ENCODE measurements at regions of chr17 and their contacts with region 1.

Region 1: GRCh38 chr17:55735731-55736405 is 13.2 kb upstream of the TMEM100 start:
- DNase-seq: no peak
- ATAC-seq: no peak

Region 2: GRCh38 chr17:55285340-55286301 is 450.2 kb before region 1 on chr17:
- intact Hi-C with region 1: loop called (anchors 10 kb)
- DNase-seq: peak; percentile 92
- ATAC-seq: peak; percentile 85

Region 3: DNA sequence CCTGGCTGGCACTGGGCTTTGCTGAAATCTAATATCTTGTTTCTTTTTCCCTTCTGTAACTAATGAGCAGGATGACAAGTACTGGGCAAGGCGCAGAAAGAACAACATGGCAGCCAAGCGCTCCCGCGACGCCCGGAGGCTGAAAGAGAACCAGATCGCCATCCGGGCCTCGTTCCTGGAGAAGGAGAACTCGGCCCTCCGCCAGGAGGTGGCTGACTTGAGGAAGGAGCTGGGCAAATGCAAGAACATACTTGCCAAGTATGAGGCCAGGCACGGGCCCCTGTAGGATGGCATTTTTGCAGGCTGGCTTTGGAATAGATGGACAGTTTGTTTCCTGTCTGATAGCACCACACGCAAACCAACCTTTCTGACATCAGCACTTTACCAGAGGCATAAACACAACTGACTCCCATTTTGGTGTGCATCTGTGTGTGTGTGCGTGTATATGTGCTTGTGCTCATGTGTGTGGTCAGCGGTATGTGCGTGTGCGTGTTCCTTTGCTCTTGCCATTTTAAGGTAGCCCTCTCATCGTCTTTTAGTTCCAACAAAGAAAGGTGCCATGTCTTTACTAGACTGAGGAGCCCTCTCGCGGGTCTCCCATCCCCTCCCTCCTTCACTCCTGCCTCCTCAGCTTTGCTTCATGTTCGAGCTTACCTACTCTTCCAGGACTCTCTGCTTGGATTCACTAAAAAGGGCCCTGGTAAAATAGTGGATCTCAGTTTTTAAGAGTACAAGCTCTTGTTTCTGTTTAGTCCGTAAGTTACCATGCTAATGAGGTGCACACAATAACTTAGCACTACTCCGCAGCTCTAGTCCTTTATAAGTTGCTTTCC is 415.1 kb before region 1 on chr17:
- intact Hi-C with region 1: no loop called
- DNase-seq: peak; percentile 63
- ATAC-seq: no peak

Region 4: DNA sequence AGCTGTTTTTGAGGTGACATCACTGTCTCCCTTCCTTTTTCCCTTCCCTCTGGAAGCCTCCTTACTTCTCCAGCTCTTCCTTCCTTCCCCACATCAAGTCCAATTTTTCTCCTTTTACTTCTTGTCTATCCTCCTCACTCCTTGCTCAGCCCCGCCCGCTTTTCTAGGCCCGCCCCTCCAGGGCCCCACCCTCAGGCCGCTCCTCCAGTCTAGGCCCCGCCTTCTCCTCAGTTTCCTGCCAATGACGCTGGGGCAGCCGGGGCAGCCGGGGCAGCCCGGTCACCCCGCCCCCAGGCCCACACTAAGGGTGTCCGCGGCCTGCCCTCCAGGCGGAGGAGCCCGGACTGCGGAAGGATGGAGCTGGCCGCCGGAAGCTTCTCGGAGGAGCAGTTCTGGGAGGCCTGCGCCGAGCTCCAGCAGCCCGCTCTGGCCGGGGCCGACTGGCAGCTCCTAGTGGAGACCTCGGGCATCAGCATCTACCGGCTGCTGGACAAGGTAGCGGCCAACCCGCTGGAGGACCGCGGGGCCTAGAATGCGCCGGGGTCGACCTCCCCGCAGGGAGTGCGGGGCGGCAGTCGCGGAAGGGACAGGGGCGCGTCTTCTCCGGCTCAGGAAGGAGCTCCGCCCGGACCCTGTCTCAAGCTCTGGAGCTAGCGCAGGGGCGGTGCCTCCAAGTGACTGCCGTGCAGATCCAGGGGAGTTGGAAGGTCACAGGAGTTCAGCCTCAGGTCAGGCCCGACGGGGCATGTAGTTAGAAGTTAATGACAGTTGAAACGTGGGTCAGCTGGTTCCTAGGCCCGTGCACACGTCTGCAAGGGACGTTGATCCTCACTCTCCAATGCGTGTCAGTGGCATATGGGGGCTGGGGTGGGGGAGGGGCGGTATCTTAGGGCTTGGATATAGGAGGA is 15.1 kb after region 1 on chr17 and contains the start of gene PCTP:
- intact Hi-C with region 1: loop called (anchors 2 kb)
- DNase-seq: peak; percentile 98
- ATAC-seq: peak; percentile 100
- total RNA-seq, gene PCTP: 21.9 TPM

Region 5: DNA sequence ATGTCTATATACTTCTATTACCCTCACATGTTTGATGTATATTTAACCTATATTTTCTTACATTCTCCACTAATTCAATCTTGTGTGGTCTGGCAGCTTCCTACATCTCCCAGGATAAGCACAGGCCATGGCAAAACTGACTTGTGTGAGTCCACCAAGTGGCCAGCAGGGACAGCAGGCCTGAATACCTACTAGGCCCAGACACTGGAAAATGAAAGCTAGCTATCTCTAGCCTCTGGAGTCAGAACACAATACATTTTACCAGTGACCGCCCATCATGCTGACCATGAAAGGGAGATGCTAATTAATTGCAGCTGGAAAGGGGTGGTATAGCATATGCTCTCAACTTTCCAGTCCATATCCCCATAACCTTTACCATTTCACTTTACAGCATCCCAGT is 147.3 kb after region 1 on chr17:
- intact Hi-C with region 1: no loop called
- DNase-seq: no peak
- ATAC-seq: no peak

Measured in Right ventricle myocardium inferior (tissue), 1 donor.